Brain microvascular endothelial cell (primary cell): ENCODE measurements at regions of chr6 and their contacts with region 1.

Region 1: DNA sequence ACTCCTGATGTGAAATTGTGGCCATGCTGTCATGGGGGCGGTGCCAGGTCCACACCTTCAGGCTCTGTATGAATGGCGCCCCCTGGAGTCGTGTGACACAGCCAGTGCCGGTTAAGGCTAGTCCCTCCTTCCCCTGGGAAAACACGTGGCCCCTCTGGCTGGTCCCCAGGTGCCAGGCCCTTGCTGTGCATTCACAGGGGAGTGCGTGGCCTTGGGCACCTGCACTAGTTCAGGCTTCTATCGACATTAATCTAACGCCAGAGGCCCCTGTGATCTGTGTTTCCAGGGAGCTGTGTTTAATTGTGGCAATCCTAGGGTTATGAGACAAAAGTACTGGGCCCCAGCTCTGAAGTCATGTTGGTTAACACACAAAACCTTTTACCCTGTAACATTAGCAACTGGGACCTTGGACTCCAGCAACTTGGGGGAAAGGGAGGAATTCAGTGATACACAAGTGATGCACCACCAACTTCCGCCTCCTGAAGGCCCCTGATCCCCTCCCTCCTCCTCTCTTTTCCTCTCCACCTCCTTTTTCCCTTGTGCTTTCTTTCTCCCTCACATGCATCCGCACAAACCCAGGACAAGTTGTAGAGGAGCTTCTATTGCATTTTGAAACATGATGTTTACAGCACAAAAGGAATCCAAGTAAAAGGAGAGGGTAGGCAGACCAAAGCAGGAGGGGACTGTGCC is 74.0 kb downstream of the SSR1 start:
- DNase-seq: peak; percentile 75
- H3K4me3 ChIP-seq: no peak overlapping the region
- H3K27ac ChIP-seq: no peak overlapping the region
- H3K27me3 ChIP-seq: no peaks in the 10 kb centered on the region
- CTCF ChIP-seq: peak; percentile 83

Region 2: GRCh38 chr6:6724539-6725467 is 514.2 kb before region 1 on chr6:
- in situ Hi-C with region 1: loop called (anchors 25 kb)
- DNase-seq: peak; percentile 59
- H3K4me3 ChIP-seq: peak overlapping the region; percentile 50
- H3K27ac ChIP-seq: no peak overlapping the region
- H3K27me3 ChIP-seq: no peaks in the 10 kb centered on the region
- CTCF ChIP-seq: peak; percentile 75